ENCODE measurements at regions of chr3 and their contacts with region 1.

Region 1: DNA sequence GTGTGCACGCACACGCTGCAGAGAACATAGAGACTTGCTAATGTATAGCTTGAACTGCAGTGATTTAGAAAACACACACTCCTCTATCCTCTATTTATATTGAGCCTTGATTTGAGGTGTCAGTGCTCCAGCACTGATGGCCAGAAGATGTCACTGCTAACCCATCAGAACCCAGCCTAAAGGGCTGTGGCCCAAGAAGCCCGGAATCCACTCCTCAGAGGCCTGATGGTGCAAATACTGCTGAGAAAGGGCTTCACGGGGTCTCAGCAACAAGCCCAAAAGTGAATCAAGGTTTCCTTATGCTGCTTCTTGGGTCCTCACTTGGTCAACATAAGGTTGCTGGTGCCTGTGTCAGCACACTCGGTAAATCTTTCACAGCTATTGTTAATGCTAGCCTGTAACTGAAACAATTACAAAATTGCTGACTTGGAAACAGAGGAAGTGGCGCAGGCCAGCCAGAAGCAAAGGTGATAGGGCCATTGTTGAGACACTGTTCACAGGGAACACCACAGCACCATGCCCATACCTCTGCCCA is 60.3 kb downstream of the HEG1 start:
- DNase-seq: peak; percentile 55 to 72
- ATAC-seq: peak; percentile 87 to 96 (median 92)
- H3K4me3 ChIP-seq: no peak overlapping the region
- H3K27ac ChIP-seq: peak overlapping the region; percentile 9
- H3K4me1 ChIP-seq: peaks cover 9% of the 10 kb centered on the region
- H3K27me3 ChIP-seq: no peaks in the 10 kb centered on the region
- CTCF ChIP-seq: peak; percentile 83

Region 2: DNA sequence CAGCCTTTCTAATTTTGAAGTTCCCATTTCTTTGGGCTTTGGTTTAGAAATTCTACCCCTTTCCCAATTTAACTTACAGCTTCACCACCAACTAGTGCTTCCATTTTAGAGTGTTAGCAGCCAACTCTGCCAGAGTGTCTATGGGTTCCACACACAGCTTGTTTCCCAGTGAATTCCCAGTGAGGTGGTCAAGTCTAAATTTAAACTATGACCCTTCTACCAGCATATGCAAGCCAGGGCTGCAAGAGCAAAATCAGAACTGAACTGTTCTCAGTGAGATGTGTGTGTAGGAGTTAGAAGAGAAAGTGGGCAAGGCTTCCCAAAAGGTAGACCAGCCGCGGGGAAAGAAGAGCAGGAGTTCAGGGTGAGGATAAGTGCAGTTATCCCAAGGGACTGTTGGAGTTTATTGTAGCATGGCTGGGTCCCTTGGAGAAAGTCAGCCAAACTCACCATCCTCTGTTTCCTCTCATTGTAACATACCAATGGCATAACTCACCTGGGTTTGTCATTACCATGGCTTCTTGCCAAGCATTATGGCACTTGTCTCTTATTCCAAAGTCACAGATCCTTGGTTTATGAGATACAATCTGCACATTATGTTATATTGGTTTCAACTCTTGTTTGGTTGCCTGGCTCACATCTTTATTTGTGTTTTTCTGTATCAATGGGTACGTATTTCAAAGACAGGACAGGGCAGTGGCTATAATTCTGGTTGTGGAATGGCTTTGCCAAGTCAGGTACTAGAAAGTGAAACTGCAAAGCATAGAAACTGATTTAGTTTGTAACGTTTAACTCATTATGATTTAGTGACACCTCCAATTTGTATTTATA is 395.5 kb before region 1 on chr3:
- intact Hi-C with region 1: no loop called
- DNase-seq: no peak
- ATAC-seq: peak; percentile 92 to 95 (median 94)
- H3K4me3 ChIP-seq: peak overlapping the region; percentile 5
- H3K27ac ChIP-seq: peak overlapping the region; percentile 85
- H3K4me1 ChIP-seq: peaks cover 58% of the 10 kb centered on the region
- H3K27me3 ChIP-seq: no peaks in the 10 kb centered on the region
- CTCF ChIP-seq: no peak

Region 3: DNA sequence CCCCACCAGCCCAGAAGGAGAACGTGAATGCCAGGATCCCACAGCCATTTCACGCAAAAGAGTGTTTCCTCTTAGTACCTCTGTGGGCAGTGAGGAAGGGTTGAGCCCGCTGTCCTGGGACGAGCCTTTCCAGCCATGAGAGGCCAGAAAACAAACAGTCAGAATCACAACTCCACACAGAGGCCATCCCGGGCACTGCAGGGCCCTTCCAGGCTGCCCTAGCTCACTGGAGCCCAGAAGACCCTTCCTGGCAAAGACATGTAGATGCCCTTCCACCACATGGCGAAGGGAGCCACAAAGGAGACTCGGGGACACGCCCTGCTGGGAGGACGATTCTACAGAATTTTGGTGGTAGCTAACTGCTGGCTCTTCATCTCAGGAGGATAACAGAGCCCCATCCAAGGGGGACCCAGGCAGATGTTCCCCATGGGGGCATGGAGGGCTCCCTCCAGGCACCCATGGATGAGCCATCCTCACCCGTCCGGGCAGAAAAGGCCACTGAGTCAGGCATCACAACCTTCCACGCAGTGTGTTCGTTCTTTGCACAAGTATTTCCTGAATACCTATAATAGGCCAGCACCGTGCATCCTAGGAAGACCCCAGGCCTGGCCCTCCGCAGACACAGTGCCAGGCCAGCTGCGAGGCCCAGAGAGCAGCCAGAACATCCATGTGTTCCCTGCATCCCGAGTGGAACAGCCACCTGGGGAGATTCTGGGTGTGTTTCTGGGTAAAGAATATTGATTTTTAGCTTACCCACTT is 169.8 kb after region 1 on chr3:
- intact Hi-C with region 1: loop called (anchors 2 to 10 kb)
- DNase-seq: peak; percentile 50 to 67
- ATAC-seq: peak; percentile 69 to 86 (median 82)
- H3K4me3 ChIP-seq: no peak overlapping the region
- H3K27ac ChIP-seq: no peak overlapping the region
- H3K4me1 ChIP-seq: no peaks in the 10 kb centered on the region
- H3K27me3 ChIP-seq: no peaks in the 10 kb centered on the region
- CTCF ChIP-seq: peak; percentile 62

Region 4: DNA sequence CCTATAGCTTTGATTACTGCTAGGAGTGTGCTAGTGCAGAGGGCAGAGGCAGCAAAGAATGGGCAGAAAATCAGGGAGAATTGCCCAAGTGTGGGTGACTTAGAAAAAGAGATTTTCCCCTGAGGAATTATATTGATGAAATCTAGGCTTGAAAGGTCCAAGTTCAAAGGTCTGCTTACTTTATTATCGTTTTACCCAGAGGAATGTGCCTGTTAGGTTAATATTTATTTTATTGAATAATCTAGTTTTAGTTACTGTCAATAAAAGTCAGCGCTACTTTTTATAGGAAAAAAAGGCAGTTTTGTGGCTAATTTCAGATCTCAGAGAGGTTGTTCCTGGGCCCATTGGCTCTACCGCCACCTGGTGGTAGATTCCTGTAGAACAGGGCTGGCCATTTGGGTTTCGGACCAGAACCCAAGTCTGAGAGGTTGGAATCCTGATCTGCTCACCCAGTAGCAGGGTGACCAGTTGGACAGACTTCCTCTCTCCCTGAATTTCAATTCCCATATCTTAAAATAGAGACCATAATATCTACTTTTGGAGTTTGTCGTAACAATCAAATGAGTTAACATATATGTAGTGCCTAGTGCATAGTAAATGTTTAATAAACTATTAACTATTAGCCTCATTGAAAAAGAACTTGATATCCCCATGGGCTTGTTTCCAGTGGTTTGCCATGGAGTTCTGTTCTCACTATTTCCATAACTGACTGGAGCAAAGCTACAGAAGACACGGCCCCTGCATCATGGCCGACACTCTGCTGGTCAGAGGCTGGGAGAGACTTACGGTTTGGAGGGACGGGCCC is 442.3 kb after region 1 on chr3:
- intact Hi-C with region 1: loop called (anchors 1 to 2 kb)
- DNase-seq: peak; percentile 56 to 67
- ATAC-seq: peak in 3 of 4 donors; percentile 53 to 75 (median 54)
- H3K4me3 ChIP-seq: no peak overlapping the region
- H3K27ac ChIP-seq: no peak overlapping the region
- H3K4me1 ChIP-seq: no peaks in the 10 kb centered on the region
- H3K27me3 ChIP-seq: no peaks in the 10 kb centered on the region
- CTCF ChIP-seq: peak; percentile 96

Region 5: DNA sequence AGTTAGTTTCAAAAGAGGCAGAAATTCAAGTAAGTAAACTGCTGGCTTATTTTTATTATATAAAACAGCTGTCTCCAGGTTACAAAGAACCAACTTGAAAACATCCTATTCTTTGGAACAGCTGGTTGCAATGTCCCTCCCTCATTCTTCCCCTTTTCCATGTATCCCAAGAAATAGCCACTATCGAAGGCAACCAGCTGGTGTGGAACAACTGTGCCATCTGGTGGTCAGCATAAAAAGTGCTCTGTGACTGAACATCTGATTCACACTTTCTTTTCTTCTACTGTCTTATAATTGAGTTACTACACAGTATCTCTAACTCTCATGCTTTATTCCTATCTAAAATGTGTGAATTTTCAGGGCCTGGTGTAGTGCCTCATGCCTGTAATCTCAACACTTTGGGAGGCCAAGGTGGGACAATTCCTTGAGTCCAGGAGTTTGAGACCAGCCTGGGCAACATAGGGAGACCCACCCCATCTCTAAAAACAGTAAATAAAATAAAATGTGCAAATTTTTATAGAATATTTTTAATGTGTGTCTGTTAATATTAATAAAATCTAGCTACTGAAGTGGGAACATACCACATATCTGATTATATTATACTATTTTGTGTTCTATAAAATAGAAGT is 590.2 kb after region 1 on chr3:
- intact Hi-C with region 1: loop called in 1 of 2 experiments (anchors 10 kb)
- DNase-seq: peak in 1 of 2 donors; percentile 23
- ATAC-seq: peak; percentile 73 to 84 (median 78)
- H3K4me3 ChIP-seq: no peak overlapping the region
- H3K27ac ChIP-seq: no peak overlapping the region
- H3K4me1 ChIP-seq: peaks cover 56% of the 10 kb centered on the region
- H3K27me3 ChIP-seq: no peaks in the 10 kb centered on the region
- CTCF ChIP-seq: peak; percentile 84

Measured in psoas muscle (tissue), 8 donors.